ENCODE measurements at regions of chr11 and their contacts with region 1.

Region 1: DNA sequence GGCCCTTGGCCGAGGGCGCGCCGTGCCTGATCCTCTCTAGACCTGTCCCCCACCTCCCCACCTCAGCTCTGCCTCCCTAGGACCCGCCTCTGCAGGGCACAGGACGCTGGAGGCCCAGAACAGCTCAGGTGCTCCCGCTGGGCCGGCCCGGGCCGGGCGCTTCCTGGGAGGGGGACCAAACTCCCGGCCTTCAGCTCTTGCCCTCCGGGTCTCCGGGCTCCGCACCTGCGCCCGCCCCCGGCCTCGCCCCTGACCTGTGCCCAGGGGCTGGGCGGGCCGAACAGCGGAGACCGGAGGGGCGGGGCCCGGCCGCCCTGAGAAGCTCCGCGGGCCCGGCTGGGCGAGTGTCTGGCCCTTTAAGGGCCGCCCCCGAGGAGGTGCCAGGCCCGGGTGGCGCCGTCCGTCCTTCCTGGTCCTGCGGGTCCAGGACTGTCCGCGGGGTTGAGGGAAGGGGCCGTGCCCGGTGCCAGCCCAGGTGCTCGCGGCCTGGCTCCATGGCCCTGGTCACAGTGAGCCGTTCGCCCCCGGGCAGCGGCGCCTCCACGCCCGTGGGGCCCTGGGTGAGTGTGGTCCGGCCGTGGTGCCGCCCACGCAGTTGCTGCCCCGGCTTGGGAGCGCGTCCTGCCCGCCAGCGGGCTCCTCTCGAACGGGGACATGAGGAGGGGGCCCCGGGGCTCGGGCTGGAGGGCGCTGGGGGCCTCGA is at the start of gene SSH3:
- DNase-seq: peak; percentile 81 to 96
- H3K4me3 ChIP-seq: peak within 1 kb of the TSS; percentile 90
- H3K27ac ChIP-seq: peak within 1 kb of the TSS; percentile 68
- H3K4me1 ChIP-seq: peaks cover 29% of the 10 kb centered on the region
- H3K27me3 ChIP-seq: no peaks in the 10 kb centered on the region
- CTCF ChIP-seq: no peak
- total RNA-seq, gene SSH3: 97.8 and 124 TPM in 2 replicates

Region 2: DNA sequence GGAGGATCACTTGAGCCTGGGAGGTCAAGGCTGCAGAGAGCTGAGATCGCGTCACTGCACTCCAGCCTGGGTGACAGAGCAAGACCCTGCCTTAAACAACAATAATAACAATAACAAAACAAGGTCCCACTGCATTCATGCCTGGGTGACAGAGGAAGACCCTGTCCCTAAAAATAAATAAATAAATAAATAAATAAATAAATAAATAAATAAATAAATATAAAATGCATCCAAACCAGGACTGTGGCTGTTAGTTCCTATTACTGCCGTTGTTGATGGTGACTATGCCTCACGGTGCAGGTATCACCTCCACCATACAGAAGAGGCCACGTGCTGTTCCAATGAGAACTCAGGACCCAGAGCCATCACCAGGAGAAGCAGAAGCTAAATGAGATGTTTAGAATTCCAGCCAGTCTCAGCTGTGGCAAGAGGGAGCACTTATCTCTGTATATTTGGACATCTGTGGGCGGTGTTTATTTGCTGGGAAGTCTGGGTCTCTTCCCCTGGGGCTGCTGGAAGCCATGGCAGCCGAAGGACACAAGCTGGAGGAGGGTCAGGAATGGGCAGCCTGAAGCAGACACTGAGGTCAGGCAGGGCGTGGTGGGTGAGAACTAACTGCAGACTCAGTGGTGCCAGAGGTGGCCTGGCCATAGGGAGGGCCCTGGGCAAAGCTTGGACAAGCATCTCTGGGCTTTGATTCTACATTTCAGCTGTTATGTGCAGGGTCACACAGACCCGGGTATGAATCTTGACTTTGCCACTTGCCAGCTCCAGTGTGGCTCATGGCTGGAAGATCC is 306.5 kb before region 1 on chr11:
- CTCF ChIA-PET with region 1: no interaction called
- POLR2A ChIA-PET with region 1: interaction called, 16 read pairs
- intact Hi-C with region 1: no loop called
- DNase-seq: peak; percentile 30 to 46
- H3K4me3 ChIP-seq: no peak overlapping the region
- H3K27ac ChIP-seq: no peak overlapping the region
- H3K4me1 ChIP-seq: peaks cover 9% of the 10 kb centered on the region
- H3K27me3 ChIP-seq: no peaks in the 10 kb centered on the region
- CTCF ChIP-seq: no peak

Region 3: GRCh38 chr11:67288452-67289225 is 14.6 kb before region 1 on chr11:
- CTCF ChIA-PET with region 1: interaction called, 10 read pairs
- POLR2A ChIA-PET with region 1: interaction called, 13 read pairs
- intact Hi-C with region 1: loop called (anchors 2 kb)
- DNase-seq: peak; percentile 79 to 92
- H3K4me3 ChIP-seq: peak overlapping the region; percentile 98
- H3K27ac ChIP-seq: peak overlapping the region; percentile 83
- H3K4me1 ChIP-seq: peaks cover 47% of the 10 kb centered on the region
- H3K27me3 ChIP-seq: no peaks in the 10 kb centered on the region
- CTCF ChIP-seq: no peak; the same call in 1 of the 2 replicates